GM12878 (cell line): ENCODE measurements at regions of chr13 and their contacts with region 1.

Region 1: GRCh38 chr13:46679369-46680120 is 117.4 kb downstream of the ESD start:
- DNase-seq: peak; percentile 53
- ATAC-seq: peak; percentile 91
- H3K4me3 ChIP-seq: peak overlapping the region; percentile 56
- H3K27ac ChIP-seq: peak overlapping the region; percentile 83
- H3K4me1 ChIP-seq: peaks cover 37% of the 10 kb centered on the region
- H3K27me3 ChIP-seq: no peaks in the 10 kb centered on the region
- CTCF ChIP-seq: peak; percentile 13 to 44 (median 25); a peak in 4 of 6 replicates
- EP300 ChIP-seq: no peak
- POLR2A ChIP-seq: no peak; the same call in none of the 2 replicates
- RAD21 ChIP-seq: peak; percentile 55

Region 2: DNA sequence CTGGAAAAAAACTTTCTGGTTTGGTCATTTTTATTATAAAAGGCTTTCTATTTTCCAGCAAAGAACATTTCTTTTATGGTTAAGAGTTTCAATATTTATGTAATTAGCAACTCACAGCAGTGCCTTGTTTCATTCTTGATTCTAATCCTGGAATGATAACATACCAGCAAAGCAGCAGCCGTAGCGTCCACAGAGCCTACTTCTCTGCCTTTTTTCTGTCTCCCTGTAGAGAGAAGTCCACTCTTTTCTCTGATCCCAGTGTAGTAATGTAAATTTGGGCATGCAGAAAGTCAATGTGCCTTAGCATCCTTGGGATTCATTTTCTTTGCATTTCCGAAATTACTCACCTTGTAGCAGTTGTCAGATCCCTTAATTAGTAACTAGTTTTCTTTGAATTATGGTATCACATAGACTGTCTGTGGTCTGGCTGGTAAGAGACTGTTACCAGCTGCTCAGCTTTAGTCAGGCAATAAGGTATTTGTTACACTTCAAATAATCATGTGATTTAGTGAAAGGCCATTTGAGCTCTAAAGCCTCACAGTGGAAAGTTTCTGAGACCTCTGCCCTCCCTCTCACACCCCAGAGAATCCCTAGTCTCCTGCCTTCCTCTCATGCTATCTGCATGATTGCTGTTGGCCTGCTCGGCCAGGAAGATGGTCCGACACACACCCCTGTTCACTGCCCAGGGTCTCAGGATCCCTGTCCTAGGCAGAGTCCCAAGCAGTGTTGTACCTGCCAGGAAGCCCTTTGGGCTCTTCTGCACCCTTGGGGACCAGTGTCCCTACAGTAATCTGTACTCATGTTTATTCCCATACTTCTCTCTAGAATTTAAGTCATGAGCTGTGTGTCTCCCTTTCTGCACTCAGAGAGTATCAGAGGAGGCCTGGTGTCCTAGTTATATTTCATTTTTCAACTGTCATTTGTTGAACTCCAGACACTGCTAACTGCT is 40.2 kb before region 1 on chr13:
- CTCF ChIA-PET with region 1: interaction called, 3 read pairs
- POLR2A ChIA-PET with region 1: no interaction called
- RAD21 ChIA-PET with region 1: interaction called, 4 read pairs
- SMC1A ChIA-PET with region 1: interaction called, 10 read pairs
- in situ Hi-C with region 1: no loop called
- intact Hi-C with region 1: no loop called
- DNase-seq: peak; percentile 71
- ATAC-seq: peak; percentile 95
- H3K4me3 ChIP-seq: peak overlapping the region; percentile 41
- H3K27ac ChIP-seq: peak overlapping the region; percentile 56
- H3K4me1 ChIP-seq: peaks cover 20% of the 10 kb centered on the region
- H3K27me3 ChIP-seq: no peaks in the 10 kb centered on the region
- CTCF ChIP-seq: no peak
- EP300 ChIP-seq: peak; percentile 93 to 96
- POLR2A ChIP-seq: no peak
- RAD21 ChIP-seq: no peak

Region 3: DNA sequence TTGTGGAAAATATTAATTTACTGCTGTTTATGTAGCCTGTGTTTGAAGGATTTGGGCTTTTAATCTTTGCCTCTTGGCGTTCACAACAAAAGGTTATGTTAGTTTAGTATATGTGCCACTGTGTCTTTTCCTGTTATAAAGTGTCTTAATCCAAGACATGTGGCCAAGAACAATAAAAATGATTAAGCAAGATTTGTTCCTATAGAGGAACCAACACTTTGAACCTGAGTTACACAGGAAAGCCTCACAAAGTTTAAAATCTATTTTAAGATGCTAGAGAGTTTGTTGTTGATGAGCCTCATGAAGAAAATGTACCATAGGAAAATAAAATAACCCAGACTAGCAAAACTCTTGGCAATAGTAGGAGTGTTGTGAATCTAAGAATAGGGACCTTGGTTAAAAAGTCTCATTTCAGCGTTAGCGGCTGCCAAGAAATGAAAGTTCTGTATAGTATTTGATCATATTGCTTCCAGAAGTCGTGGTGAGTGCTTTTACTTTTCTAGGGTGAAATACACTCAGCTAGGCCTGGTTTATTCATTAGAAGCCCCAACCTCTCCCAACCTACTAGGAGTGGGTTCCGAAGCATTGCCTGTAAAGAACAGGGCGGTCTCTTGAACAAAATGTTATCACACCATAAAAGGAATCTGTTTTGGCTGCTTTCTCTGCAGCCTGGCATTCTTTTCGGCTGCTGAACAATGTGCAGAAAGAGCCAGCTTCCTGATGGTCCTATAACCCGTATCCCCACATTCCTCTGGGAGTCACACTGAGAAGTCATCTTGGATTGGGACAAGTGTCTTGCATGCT is 24.0 kb before region 1 on chr13:
- CTCF ChIA-PET with region 1: interaction called, 3 read pairs
- POLR2A ChIA-PET with region 1: interaction called, 7 read pairs
- RAD21 ChIA-PET with region 1: interaction called, 4 read pairs
- SMC1A ChIA-PET with region 1: interaction called, 13 read pairs
- in situ Hi-C with region 1: no loop called
- intact Hi-C with region 1: no loop called
- DNase-seq: no peak
- ATAC-seq: peak; percentile 17
- H3K4me3 ChIP-seq: peak overlapping the region; percentile 9; the same call in 1 of the 2 replicates
- H3K27ac ChIP-seq: peak overlapping the region; percentile 67
- H3K4me1 ChIP-seq: peaks cover 29% of the 10 kb centered on the region
- H3K27me3 ChIP-seq: no peaks in the 10 kb centered on the region
- CTCF ChIP-seq: no peak
- EP300 ChIP-seq: no peak
- POLR2A ChIP-seq: no peak
- RAD21 ChIP-seq: no peak

Region 4: GRCh38 chr13:46662690-46663089 is 16.9 kb before region 1 on chr13:
- CTCF ChIA-PET with region 1: interaction called, 9 read pairs
- POLR2A ChIA-PET with region 1: interaction called, 7 read pairs
- RAD21 ChIA-PET with region 1: interaction called, 46 read pairs
- SMC1A ChIA-PET with region 1: interaction called, 19 read pairs
- in situ Hi-C with region 1: no loop called
- intact Hi-C with region 1: no loop called
- DNase-seq: no peak
- ATAC-seq: peak; percentile 70
- H3K4me3 ChIP-seq: no peak overlapping the region
- H3K27ac ChIP-seq: peak overlapping the region; percentile 51; the same call in 1 of the 2 replicates
- H3K4me1 ChIP-seq: peaks cover 47% of the 10 kb centered on the region
- H3K27me3 ChIP-seq: no peaks in the 10 kb centered on the region
- CTCF ChIP-seq: no peak
- EP300 ChIP-seq: peak in 1 of 2 experiments; percentile 59; a peak in 2 of 4 replicates
- POLR2A ChIP-seq: no peak
- RAD21 ChIP-seq: no peak

Region 5: DNA sequence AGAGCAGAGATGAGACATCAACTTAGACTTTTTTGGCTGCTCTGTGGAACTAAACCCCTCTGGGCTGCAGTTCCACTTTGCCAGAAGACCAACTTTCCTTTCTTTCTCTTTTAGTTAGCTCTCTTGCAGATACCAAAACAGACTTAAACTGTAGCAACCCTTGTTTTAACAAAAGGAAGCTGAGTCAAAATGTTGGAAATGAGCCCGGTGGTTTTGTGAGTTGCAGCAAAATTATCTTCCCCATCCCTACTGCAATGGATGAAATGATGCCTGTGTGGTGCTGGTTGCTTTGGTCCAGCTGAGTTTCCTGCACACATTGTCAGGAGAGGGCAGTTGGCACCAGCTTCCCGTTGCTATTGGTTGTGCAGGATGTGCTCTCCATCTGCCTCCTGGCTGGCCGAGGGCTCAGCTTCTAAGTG is 11.2 kb before region 1 on chr13:
- CTCF ChIA-PET with region 1: interaction called, 12 read pairs
- POLR2A ChIA-PET with region 1: interaction called, 4 read pairs
- RAD21 ChIA-PET with region 1: interaction called, 46 read pairs
- SMC1A ChIA-PET with region 1: interaction called, 19 read pairs
- in situ Hi-C with region 1: no loop called
- intact Hi-C with region 1: no loop called
- DNase-seq: no peak
- ATAC-seq: peak; percentile 11
- H3K4me3 ChIP-seq: peak overlapping the region; percentile 66
- H3K27ac ChIP-seq: peak overlapping the region; percentile 91
- H3K4me1 ChIP-seq: peaks cover 30% of the 10 kb centered on the region
- H3K27me3 ChIP-seq: no peaks in the 10 kb centered on the region
- CTCF ChIP-seq: no peak
- EP300 ChIP-seq: 0 out of 4 replicates have a peak, but pooled peaks of 1 of the 2 experiments have one; percentile 17
- POLR2A ChIP-seq: no peak
- RAD21 ChIP-seq: no peak